ENCODE measurements at regions of chr2 and their contacts with region 1.

Region 1: DNA sequence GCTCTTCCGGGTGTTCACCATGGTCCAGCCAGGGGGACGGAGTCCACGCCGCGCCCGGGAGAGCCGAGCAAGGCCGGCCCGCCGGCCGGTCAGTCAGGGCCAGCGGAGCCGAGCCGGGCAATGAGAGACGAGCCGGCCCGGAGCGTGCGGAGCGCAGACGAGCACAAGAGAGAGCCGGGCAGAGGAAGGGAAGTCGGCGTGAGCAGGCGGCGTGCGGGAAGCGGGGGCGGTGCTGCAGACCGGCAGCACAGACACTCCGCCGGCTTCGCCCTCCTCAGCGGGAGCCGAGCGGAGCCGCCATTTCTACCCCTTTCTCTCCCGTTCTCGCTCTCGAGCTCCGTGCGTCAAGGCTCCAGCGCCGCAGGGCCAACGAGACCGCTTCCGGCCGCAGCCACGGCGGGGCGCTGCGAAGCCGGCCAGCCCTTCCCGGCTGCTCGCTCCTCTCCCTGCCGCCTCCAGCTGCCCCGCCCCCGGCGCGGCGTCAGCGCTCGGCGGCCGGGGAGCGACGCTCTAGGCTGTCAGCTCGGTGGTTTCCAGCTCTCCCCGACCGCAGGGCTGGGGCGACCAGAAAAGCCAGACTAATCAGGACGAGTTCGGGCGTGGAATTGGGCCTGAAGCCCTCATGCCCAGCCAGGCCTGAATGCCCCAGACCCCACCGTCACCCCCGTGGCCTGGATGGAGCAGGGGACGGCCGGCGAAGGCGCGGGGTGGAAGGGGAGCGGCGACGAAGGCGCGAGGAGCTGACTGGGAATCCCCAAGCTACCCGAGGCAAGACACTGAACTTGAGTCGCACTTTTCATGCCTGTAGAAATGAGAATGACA is at the start of gene ATAD2B:
- DNase-seq: peak; percentile 93
- H3K4me3 Mint-ChIP-seq: peak within 1 kb of the TSS; percentile 96
- H3K27ac Mint-ChIP-seq: peak within 1 kb of the TSS; percentile 99
- H3K4me1 Mint-ChIP-seq: peaks cover 36% of the 10 kb centered on the region
- H3K27me3 Mint-ChIP-seq: no peaks in the 10 kb centered on the region
- total RNA-seq, gene ATAD2B: 12.9 to 15.4 TPM

Region 2: DNA sequence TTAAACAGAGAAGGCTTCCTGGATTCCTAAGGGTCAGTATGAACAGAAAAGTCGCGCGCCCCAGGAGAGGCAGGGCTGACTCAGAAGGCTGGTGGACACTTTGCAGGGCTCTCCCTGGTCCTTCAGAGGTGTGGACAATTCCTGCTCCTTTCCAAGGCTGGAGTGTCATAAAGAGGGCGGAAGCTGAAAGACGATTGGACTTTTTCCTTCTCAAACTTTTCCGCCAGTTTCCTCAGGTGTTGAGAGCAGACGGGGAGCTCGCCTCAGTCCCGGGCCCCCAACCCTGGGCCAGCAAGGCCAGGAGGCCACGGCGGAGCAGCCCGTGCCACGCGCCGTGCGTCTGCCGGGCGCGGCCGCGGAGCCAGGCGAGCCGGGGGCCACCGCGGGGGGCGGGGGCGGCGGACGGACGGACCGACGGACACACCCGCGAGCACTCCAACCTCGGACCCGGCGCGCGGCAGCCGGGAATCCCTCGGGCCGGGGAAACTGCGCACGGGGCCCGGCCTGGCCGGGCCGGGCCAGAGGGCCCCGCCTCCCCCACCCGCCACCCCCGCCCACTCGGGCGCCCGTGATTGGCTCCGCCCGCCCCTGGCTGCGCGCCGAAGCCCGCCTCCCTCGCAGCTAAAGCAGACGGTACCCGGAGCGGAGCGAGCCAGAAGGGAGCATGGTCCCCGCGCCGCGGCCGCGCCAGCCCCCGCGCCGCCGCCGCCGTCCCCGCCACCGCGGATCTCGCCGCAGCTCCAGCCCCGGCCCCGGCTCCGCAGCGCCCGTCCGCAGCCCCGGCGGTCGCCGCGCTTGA is 542.2 kb before region 1 on chr2 and contains the start of gene KLHL29:
- CTCF ChIA-PET with region 1: no interaction called
- intact Hi-C with region 1: loop called (anchors 5 kb)
- DNase-seq: peak; percentile 73
- H3K4me3 Mint-ChIP-seq: peak within 1 kb of the TSS; percentile 76
- H3K27ac Mint-ChIP-seq: no peak within 1 kb of the TSS
- H3K4me1 Mint-ChIP-seq: peaks cover 32% of the 10 kb centered on the region
- H3K27me3 Mint-ChIP-seq: peaks cover 38% of the 10 kb centered on the region
- total RNA-seq, gene KLHL29: 2.4 to 2.9 TPM

Region 3: GRCh38 chr2:23939987-23940717 is 13.2 kb after region 1 on chr2 and contains the start of gene UBXN2A:
- CTCF ChIA-PET with region 1: interaction called, 36 read pairs
- intact Hi-C with region 1: loop called (anchors 1 kb)
- DNase-seq: peak; percentile 71
- H3K4me3 Mint-ChIP-seq: peak within 1 kb of the TSS; percentile 88
- H3K27ac Mint-ChIP-seq: peak within 1 kb of the TSS; percentile 84
- H3K4me1 Mint-ChIP-seq: peaks cover 15% of the 10 kb centered on the region
- H3K27me3 Mint-ChIP-seq: peaks cover 8% of the 10 kb centered on the region
- total RNA-seq, gene UBXN2A: 7.6 to 7.7 TPM

Region 4: GRCh38 chr2:24058564-24059271 is 131.8 kb after region 1 on chr2:
- CTCF ChIA-PET with region 1: no interaction called
- intact Hi-C with region 1: loop called (anchors 5 kb)
- DNase-seq: no peak
- H3K4me3 Mint-ChIP-seq: no peak overlapping the region
- H3K27ac Mint-ChIP-seq: no peak overlapping the region
- H3K4me1 Mint-ChIP-seq: peaks cover 4% of the 10 kb centered on the region
- H3K27me3 Mint-ChIP-seq: peaks cover 3% of the 10 kb centered on the region

Region 5: GRCh38 chr2:24123195-24123921 is 196.4 kb after region 1 on chr2 and contains the starts of genes FAM228B and PFN4:
- CTCF ChIA-PET with region 1: interaction called, 4 read pairs
- intact Hi-C with region 1: loop called (anchors 1 kb)
- DNase-seq: peak; percentile 83
- H3K4me3 Mint-ChIP-seq: peak within 1 kb of the TSS; percentile 75
- H3K27ac Mint-ChIP-seq: peak within 1 kb of the TSS; percentile 8
- H3K4me1 Mint-ChIP-seq: peaks cover 5% of the 10 kb centered on the region
- H3K27me3 Mint-ChIP-seq: peaks cover 5% of the 10 kb centered on the region
- total RNA-seq, gene FAM228B: 3.6 to 4.1 TPM
- total RNA-seq, gene PFN4: 0.32 TPM in 1 of 2 experiments, not detected in the other

Region 6: GRCh38 chr2:24490674-24491625 is 564.0 kb after region 1 on chr2 and contains the start of gene NCOA1:
- CTCF ChIA-PET with region 1: no interaction called
- intact Hi-C with region 1: loop called (anchors 10 kb)
- DNase-seq: peak; percentile 95
- H3K4me3 Mint-ChIP-seq: peak within 1 kb of the TSS; percentile 89
- H3K27ac Mint-ChIP-seq: peak within 1 kb of the TSS; percentile 95
- H3K4me1 Mint-ChIP-seq: peaks cover 47% of the 10 kb centered on the region
- H3K27me3 Mint-ChIP-seq: no peaks in the 10 kb centered on the region
- total RNA-seq, gene NCOA1: 14.0 to 15.4 TPM

Region 7: DNA sequence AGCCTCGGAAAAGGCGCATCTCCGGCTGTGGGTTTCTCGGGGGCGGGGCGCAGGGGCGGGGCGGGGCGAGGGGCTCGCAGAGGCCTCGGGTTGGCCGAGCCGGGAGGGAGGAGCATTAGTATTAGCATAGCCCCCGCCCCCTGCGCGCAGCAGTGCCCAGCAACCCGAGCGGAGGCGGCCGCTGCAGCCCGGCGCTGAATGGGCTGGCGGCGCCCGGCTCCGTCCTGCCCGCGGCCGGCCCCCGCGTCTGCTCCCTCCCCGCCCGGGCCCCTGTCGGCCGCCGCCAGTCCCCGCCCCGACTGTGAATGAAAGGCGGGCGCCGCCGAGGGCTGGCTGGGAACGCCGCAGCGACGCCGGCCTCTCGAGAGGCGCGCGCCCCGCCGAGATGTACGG is 1115.0 kb after region 1 on chr2 and contains the start of gene EFR3B:
- CTCF ChIA-PET with region 1: interaction called, 3 read pairs
- intact Hi-C with region 1: loop called (anchors 5 kb)
- DNase-seq: peak; percentile 92
- H3K4me3 Mint-ChIP-seq: peak within 1 kb of the TSS; percentile 77
- H3K27ac Mint-ChIP-seq: no peak within 1 kb of the TSS
- H3K4me1 Mint-ChIP-seq: peaks cover 29% of the 10 kb centered on the region
- H3K27me3 Mint-ChIP-seq: peaks cover 36% of the 10 kb centered on the region
- total RNA-seq, gene EFR3B: 0.41 to 0.42 TPM